Transverse colon (tissue), 4 donors: ENCODE measurements at regions of chr17 and their contacts with region 1.

Region 1: GRCh38 chr17:1399679-1400512 is at the start of gene YWHAE:
- DNase-seq: peak; percentile 98
- H3K4me3 ChIP-seq: peak within 1 kb of the TSS; percentile 68 to 80 (median 71)
- H3K27ac ChIP-seq: peak within 1 kb of the TSS; percentile 91 to 95 (median 94)
- H3K4me1 ChIP-seq: peaks cover 19 to 44% (median 40%) of the 10 kb centered on the region in 4 donors
- H3K27me3 ChIP-seq: no peaks in the 10 kb centered on the region
- CTCF ChIP-seq: no peak
- EP300 ChIP-seq: no peak
- POLR2A ChIP-seq: peak; percentile 91
- total RNA-seq, gene YWHAE: 158 to 2,397 (median 594) TPM

Region 2: DNA sequence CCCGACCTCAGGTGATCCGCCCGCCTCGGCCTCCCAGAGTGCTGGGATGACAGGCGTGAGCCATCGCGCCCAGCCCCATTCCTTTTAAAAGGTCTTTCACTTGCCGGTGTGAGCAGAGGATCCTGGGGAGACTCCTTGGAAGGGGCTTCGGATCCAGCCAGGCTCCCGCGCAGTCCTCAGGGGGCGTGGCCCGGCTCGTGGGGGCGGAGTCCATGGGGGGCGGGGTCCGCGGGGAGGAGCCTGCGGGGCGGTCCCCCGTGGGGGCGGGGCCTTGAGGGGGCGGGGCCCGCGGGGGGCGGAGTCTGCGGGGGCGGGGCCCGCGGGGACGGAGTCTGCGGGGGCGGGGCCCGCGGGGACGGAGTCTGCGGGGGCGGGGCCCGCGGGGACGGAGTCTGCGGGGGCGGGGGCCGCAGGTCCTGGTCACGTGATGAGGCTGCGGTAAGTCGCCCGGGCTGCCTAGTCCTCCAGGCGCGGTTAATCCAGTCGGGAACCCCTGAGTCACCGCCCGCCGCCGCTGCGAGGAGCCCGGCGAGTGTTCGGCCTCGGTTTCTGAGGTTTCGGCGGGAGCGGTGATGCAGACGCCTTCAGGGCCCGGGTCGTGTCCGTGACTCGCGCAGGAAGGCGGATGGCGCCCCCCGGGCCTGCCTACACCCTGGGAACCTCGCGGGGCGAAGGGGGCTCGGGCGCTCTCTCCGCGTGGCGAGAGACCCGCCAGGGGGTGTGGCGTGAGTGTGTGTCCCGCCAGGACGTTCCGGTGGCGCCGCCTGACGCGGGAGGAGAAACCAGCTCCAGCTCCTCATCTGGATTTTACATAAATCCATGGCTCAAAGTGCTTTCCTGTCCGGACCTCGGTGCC is 196.6 kb before region 1 on chr17:
- in situ Hi-C with region 1: no loop called
- intact Hi-C with region 1: no loop called
- DNase-seq: peak; percentile 61
- H3K4me3 ChIP-seq: peak overlapping the region; percentile 32 to 53 (median 47)
- H3K27ac ChIP-seq: peak overlapping the region; percentile 61 to 78 (median 74)
- H3K4me1 ChIP-seq: peaks cover 5 to 39% (median 15%) of the 10 kb centered on the region in 4 donors
- H3K27me3 ChIP-seq: no peaks in the 10 kb centered on the region
- CTCF ChIP-seq: peak in 1 of 5 experiments; percentile 26
- EP300 ChIP-seq: no peak
- POLR2A ChIP-seq: no peak

Region 3: GRCh38 chr17:1455797-1456599 is 56.1 kb after region 1 on chr17 and contains the start of gene CRK:
- in situ Hi-C with region 1: no loop called
- intact Hi-C with region 1: loop called (anchors 2 kb)
- DNase-seq: peak; percentile 98
- H3K4me3 ChIP-seq: peak within 1 kb of the TSS; percentile 75 to 99 (median 79)
- H3K27ac ChIP-seq: peak within 1 kb of the TSS; percentile 97 to 99 (median 98)
- H3K4me1 ChIP-seq: peaks cover 27 to 68% (median 40%) of the 10 kb centered on the region in 4 donors
- H3K27me3 ChIP-seq: no peaks in the 10 kb centered on the region
- CTCF ChIP-seq: no peak
- EP300 ChIP-seq: peak; percentile 39
- POLR2A ChIP-seq: peak; percentile 94
- total RNA-seq, gene CRK: 33.4 to 95.3 (median 63.4) TPM